CD8-positive, alpha-beta T cell (primary cell): ENCODE measurements at regions of chrX and their contacts with region 1.

Region 1: GRCh38 chrX:1246816-1247215 is 21.8 kb upstream of the CSF2RA start:
- DNase-seq: peak; percentile 59 to 89 (median 74)
- ATAC-seq: peak; percentile 67
- H3K4me3 ChIP-seq: no peak overlapping the region
- H3K4me3 Mint-ChIP-seq: no peak overlapping the region
- H3K27ac ChIP-seq: no peak overlapping the region
- H3K27ac Mint-ChIP-seq: peak overlapping the region; percentile 27
- H3K4me1 ChIP-seq: peaks cover 16% of the 10 kb centered on the region
- H3K4me1 Mint-ChIP-seq: peaks cover 15% of the 10 kb centered on the region
- H3K27me3 ChIP-seq: no peaks in the 10 kb centered on the region
- H3K27me3 Mint-ChIP-seq: no peaks in the 10 kb centered on the region
- CTCF ChIP-seq: peak; percentile 75

Region 2: DNA sequence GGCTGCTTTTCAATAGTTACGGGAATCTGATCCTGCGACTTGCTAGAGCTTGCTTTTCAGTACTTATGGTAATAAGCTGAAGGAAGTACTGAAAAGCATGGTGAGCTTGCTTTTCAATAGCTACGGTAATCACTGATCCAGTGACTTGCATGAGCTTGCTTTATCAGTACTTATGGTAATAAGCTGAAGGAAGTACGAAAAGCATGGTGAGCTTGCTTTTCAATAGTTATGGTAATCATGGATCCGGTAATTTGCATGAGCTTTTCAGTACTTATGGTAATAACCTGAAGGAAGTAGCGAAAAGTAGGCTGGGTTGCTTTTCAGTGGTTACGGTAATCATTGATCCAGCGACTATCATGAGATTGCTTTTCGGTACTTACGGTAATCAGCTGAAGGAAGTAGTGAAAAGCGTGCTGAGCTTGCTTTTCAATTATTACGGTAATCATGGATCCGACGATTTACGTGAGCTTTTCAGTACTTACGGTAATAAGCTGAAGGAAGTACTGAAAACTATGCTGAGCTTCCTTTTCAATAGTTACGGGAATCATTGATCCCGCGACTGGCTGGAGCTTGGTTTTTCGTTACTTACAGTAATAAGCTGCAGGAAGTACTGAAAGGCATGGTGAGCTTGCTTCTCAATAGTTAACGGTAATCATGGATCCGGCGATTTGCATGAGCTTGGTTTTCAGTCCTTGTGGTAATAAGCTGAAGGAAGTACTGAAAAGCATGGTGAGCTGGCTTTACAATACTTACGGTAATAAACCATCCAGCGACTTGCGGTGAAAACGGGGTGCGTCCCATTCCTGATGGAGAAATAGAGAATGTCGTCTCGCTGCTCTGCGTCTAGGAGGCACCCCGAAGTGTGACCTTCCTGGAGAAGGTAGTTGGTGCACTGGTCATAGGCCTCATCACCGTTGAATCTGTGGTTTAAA is 40.9 kb before region 1 on chrX:
- CTCF ChIA-PET with region 1: no interaction called
- POLR2A ChIA-PET with region 1: no interaction called
- intact Hi-C with region 1: loop called (anchors 1 to 2 kb)
- DNase-seq: peak in 6 of 9 experiments; percentile 6 to 76 (median 40)
- ATAC-seq: peak; percentile 45
- H3K4me3 ChIP-seq: peak overlapping the region; percentile 43 to 52
- H3K4me3 Mint-ChIP-seq: peak overlapping the region; percentile 77
- H3K27ac ChIP-seq: no peak overlapping the region
- H3K27ac Mint-ChIP-seq: no peak overlapping the region
- H3K4me1 ChIP-seq: peaks cover 20% of the 10 kb centered on the region
- H3K4me1 Mint-ChIP-seq: peaks cover 27% of the 10 kb centered on the region
- H3K27me3 ChIP-seq: peaks cover 0 to 2% of the 10 kb centered on the region in 2 experiments
- H3K27me3 Mint-ChIP-seq: no peaks in the 10 kb centered on the region
- CTCF ChIP-seq: no peak

Region 3: DNA sequence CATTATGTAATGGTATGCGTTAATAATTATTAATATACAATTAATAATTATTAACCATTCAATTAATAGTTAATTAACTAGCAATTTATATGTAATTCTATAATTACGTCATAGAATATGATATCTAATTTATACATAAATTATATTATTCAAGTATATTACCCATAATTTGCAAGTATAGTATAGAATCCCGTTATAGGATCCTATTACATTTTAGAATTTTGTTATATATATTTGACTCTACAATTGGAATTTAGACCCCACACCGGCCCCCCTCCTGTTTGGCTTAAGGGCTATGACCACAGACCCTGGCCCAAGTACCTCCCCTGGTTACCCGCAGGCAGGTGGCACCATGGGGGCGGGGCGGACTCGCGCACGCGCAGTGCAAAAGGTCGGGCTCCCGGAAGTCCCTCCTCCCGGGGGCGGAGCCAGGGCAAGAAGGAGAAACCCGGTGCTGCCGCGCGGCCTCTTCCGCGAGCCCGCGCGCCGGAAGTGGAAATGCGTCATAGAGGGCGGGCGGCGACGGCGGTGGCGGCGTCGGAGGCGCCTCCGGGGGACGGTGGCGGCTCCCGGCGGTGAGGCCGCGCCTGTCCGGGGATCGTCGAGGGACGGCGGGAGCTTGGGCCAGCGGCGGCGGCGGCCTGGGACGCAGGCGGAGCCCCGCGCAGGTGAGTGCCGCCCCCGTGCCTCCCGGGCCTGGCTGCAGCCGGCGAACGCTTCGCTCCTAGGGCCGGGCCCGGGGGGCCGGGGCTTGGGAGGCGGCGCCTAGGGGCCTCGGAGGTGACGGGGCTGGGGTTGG is 344.5 kb after region 1 on chrX and contains the start of gene AKAP17A:
- CTCF ChIA-PET with region 1: no interaction called
- POLR2A ChIA-PET with region 1: no interaction called
- intact Hi-C with region 1: loop called in 1 of 2 experiments (anchors 5 kb)
- DNase-seq: peak; percentile 95 to 100 (median 98)
- ATAC-seq: peak; percentile 88
- H3K4me3 ChIP-seq: peak within 1 kb of the TSS; percentile 82 to 85
- H3K4me3 Mint-ChIP-seq: peak within 1 kb of the TSS; percentile 90
- H3K27ac ChIP-seq: peak within 1 kb of the TSS; percentile 71 to 79
- H3K27ac Mint-ChIP-seq: peak within 1 kb of the TSS; percentile 91
- H3K4me1 ChIP-seq: peaks cover 35% of the 10 kb centered on the region
- H3K4me1 Mint-ChIP-seq: peaks cover 39% of the 10 kb centered on the region
- H3K27me3 ChIP-seq: no peaks in the 10 kb centered on the region
- H3K27me3 Mint-ChIP-seq: no peaks in the 10 kb centered on the region
- CTCF ChIP-seq: no peak
- total RNA-seq, gene AKAP17A: 193 to 209 TPM

Region 4: DNA sequence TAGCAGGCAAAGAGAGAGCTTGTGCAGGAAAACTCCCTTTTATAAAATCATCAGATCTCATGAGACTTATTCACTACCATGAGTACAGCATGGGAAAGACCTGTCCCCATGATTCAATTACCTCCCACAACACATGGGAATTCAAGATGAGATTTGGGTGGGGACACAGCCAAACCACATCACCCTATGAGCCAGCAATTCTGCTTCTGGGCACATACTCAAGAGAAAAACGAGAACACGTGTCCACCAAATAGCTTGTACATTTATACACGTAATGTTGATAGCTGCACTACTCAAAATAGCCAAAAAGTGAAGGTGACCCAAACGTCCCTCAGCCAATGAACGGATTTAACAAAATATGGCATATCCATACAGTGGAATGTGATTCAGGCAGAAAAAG is 1348.4 kb after region 1 on chrX:
- CTCF ChIA-PET with region 1: no interaction called
- POLR2A ChIA-PET with region 1: no interaction called
- intact Hi-C with region 1: loop called in 1 of 2 experiments (anchors 1 kb)
- DNase-seq: no peak
- ATAC-seq: no peak
- H3K4me3 ChIP-seq: no peak overlapping the region
- H3K4me3 Mint-ChIP-seq: no peak overlapping the region
- H3K27ac ChIP-seq: no peak overlapping the region
- H3K27ac Mint-ChIP-seq: no peak overlapping the region
- H3K4me1 ChIP-seq: no peaks in the 10 kb centered on the region
- H3K4me1 Mint-ChIP-seq: peaks cover 12% of the 10 kb centered on the region
- H3K27me3 ChIP-seq: no peaks in the 10 kb centered on the region
- H3K27me3 Mint-ChIP-seq: no peaks in the 10 kb centered on the region
- CTCF ChIP-seq: no peak